Left cardiac atrium (tissue), 4 donors: ENCODE measurements at regions of chr22 and their contacts with region 1.

Region 1: GRCh38 chr22:19576460-19577421 is 52.5 kb upstream of the CLDN5 start:
- DNase-seq: peak; percentile 33
- ATAC-seq: peak; percentile 53 to 58

Region 2: DNA sequence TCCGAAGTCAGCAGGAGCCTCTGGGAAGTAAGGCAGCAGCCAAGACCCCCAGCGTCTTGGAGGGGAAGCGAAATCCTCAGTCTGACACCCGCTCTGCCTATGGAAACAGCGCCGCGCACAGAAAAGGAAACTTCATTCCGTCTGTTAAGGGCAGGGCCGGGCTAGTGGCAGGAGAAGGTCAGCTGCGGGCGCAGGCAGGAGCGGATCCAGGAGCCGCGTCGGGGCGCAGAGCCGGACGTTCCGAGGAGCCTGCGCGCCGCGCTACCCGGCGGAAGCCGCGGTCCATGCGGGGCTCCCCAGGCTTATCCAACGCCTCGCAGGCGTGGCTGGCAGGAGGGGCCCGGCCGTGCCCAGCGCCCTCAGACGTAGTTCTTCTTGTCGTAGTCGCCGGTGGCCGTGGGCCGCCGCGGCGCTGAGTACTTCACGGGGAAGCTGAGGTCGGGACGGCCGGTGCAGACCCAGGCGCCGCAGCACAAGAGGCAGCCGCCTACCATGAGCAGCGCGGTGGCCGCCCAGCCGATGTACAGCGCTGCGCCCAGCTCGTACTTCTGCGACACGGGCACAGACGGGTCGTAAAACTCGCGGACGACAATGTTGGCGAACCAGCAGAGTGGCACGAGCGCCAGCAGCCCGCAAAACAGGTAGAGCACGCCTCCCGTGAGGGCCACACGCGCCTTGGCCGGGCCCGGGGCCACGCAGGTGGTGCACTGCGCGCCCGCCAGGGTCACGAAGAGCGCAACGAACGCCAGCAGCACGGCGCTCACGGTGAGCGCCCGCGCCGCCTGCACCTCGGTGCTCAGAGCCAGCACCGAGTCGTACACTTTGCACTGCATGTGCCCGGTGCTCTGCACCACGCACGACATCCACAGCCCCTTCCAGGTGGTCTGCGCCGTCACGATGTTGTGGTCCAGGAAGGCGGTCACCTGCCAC is 53.2 kb before region 1 on chr22:
- intact Hi-C with region 1: loop called (anchors 1 to 10 kb)
- DNase-seq: no peak
- ATAC-seq: peak; percentile 1 to 3

Region 3: DNA sequence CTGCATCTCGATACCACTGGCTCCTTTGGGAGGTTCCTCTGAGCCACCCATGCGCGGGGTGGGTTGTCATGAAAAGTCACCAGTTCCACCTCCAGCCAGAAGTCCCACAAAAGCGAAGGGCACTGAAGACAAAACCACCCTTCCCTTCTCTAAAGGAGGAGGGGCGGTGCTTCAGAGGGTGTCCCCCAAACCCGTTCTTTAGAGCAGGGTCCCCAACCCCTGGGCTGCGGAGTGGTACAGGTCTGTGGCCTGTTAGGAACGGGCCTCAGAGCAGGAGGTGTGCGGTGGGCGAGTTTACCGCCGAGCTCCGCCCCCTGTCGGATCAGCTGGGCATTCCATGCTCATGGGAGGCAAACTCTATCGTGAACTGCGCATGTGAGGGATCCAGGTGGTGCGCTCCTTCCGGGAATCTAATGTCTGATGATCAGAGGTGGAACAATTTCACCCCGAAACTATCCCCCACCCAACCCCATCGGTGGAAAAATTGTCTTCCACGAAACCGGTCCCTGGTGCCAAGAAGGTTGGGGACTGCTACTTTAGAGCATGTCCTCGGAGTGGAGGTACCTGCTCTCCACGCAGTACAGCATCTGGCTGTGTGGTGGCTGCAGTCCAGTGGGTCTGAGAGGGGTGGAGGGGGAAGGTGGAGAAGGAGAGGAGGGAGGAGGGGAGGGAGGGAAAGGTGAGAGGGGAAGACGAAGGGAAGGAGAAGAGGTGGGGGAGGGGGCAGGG is 64.7 kb after region 1 on chr22:
- intact Hi-C with region 1: no loop called
- DNase-seq: no peak
- ATAC-seq: peak in 1 of 2 donors; percentile 18